Caco-2 (cell line): ENCODE measurements at regions of chr12 and their contacts with region 1.

Region 1: DNA sequence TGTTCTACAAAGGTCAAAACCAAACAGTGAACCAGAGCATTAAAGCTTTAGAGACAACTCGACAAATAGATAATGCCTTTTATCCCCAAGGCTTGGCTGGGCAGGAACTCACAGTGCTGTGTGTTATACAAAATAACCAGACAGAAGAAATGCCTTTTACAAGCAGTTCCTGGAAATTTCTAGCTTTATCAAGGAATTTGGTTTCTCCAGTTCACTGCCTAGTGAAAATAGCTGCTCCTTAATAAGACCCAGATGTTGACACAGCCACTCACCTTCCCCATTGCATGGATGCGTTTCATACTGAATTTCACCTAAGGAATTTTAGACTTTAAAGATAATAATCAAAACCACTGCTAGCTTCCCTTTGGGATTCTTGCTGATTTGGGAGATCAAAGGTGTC is 162.1 kb downstream of the C12orf75 start:
- DNase-seq: peak; percentile 72 to 74
- H3K4me3 ChIP-seq: no peak overlapping the region
- H3K4me3 Mint-ChIP-seq: peak overlapping the region; percentile 54
- H3K27ac Mint-ChIP-seq: peak overlapping the region; percentile 88
- H3K4me1 ChIP-seq: peaks cover 28% of the 10 kb centered on the region
- H3K4me1 Mint-ChIP-seq: peaks cover 26% of the 10 kb centered on the region
- H3K27me3 ChIP-seq: no peaks in the 10 kb centered on the region
- H3K27me3 Mint-ChIP-seq: no peaks in the 10 kb centered on the region
- CTCF ChIP-seq: no peak

Region 2: DNA sequence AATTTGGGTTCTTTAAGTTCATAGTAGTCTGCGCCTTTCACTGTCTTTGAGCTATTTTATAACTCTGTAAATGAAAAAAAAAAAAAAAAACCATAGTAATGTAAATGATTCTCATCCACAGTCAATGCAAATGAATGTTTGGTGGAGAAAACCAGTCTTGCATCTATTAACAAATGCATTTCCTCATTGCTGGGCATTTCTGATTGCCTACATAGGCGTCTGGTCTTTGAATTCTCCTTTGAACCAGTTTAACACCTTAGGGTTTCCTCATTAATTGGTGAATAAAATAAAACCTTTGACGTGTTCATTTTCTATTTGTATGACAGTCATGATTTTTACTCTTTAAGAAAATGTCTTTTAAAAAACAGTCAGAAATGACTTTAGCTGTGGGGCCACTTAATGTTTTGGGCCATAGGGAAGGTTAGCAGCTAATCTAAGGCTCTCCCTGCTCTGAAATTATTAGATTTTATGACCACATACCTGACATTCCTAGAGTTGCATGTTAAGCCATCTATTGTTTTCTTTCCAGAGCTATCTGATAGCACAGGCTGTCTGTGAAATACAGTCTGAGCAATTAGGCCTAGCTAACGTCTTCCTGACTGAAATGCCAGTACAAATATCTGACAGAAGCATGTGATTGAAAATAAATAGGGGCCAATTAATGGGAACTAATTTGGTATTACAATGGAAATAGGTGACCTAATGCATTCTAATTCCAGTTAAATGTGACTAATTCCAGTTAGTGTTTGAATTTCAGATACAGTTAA is 47.2 kb before region 1 on chr12:
- CTCF ChIA-PET with region 1: interaction called, 3 read pairs
- POLR2A ChIA-PET with region 1: interaction called, 4 read pairs
- intact Hi-C with region 1: loop called (anchors 1 kb)
- DNase-seq: peak; percentile 50 to 69
- H3K4me3 ChIP-seq: no peak overlapping the region
- H3K4me3 Mint-ChIP-seq: no peak overlapping the region
- H3K27ac Mint-ChIP-seq: peak overlapping the region; percentile 88
- H3K4me1 ChIP-seq: peaks cover 45% of the 10 kb centered on the region
- H3K4me1 Mint-ChIP-seq: peaks cover 15% of the 10 kb centered on the region
- H3K27me3 ChIP-seq: no peaks in the 10 kb centered on the region
- H3K27me3 Mint-ChIP-seq: no peaks in the 10 kb centered on the region
- CTCF ChIP-seq: no peak

Region 3: DNA sequence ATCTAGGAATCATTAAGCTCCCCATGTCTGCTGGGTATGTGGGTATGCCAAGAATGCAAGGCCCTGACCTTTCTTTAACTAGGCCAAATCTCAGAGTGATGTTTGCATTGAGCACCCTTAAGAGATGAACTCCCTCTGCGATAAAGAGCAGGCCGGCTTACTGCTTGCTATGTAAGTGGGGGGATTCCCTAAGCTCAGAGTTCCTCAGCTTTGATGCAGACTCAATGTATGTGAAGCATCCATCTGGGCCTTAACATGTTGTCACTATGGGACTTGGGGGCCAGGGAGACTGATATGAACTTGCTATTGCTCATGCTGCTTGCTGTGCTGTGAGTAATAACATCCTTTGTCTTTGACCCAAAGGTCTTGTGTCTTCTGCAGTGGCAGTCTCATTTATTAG is 12.4 kb before region 1 on chr12:
- CTCF ChIA-PET with region 1: no interaction called
- POLR2A ChIA-PET with region 1: no interaction called
- intact Hi-C with region 1: loop called (anchors 1 kb)
- DNase-seq: peak; percentile 55 to 65
- H3K4me3 ChIP-seq: no peak overlapping the region
- H3K4me3 Mint-ChIP-seq: no peak overlapping the region
- H3K27ac Mint-ChIP-seq: peak overlapping the region; percentile 65
- H3K4me1 ChIP-seq: peaks cover 32% of the 10 kb centered on the region
- H3K4me1 Mint-ChIP-seq: peaks cover 46% of the 10 kb centered on the region
- H3K27me3 ChIP-seq: no peaks in the 10 kb centered on the region
- H3K27me3 Mint-ChIP-seq: no peaks in the 10 kb centered on the region
- CTCF ChIP-seq: no peak

Region 4: DNA sequence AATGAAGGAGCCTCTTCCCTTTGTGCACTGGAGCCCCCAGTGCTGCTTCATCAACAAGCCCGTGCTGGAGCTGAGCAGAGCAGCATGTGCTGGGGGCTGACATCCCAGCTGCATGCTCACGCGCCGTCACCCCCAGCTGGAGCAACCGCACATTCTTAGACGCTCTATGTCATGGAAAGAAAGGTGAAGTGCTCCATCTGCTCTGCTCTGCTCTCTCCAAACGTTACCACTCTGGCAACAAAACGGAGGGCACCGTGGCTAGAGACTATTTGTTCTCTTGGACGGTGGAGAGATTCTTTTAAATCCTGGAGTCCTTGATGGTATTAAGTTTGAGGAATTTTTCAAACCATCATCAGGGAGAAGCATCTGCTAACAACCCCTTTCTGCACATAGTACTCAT is 46.3 kb after region 1 on chr12:
- CTCF ChIA-PET with region 1: no interaction called
- POLR2A ChIA-PET with region 1: no interaction called
- intact Hi-C with region 1: no loop called
- DNase-seq: no peak
- H3K4me3 ChIP-seq: no peak overlapping the region
- H3K4me3 Mint-ChIP-seq: no peak overlapping the region
- H3K27ac Mint-ChIP-seq: no peak overlapping the region
- H3K4me1 ChIP-seq: no peaks in the 10 kb centered on the region
- H3K4me1 Mint-ChIP-seq: no peaks in the 10 kb centered on the region
- H3K27me3 ChIP-seq: no peaks in the 10 kb centered on the region
- H3K27me3 Mint-ChIP-seq: no peaks in the 10 kb centered on the region
- CTCF ChIP-seq: no peak

Region 5: GRCh38 chr12:105672121-105672975 is 179.8 kb after region 1 on chr12:
- CTCF ChIA-PET with region 1: no interaction called
- POLR2A ChIA-PET with region 1: no interaction called
- intact Hi-C with region 1: no loop called
- DNase-seq: no peak
- H3K4me3 ChIP-seq: no peak overlapping the region
- H3K4me3 Mint-ChIP-seq: no peak overlapping the region
- H3K27ac Mint-ChIP-seq: no peak overlapping the region
- H3K4me1 ChIP-seq: peaks cover 5% of the 10 kb centered on the region; the same call in 1 of the 2 replicates
- H3K4me1 Mint-ChIP-seq: peaks cover 17% of the 10 kb centered on the region
- H3K27me3 ChIP-seq: no peaks in the 10 kb centered on the region
- H3K27me3 Mint-ChIP-seq: no peaks in the 10 kb centered on the region
- CTCF ChIP-seq: no peak

Region 6: DNA sequence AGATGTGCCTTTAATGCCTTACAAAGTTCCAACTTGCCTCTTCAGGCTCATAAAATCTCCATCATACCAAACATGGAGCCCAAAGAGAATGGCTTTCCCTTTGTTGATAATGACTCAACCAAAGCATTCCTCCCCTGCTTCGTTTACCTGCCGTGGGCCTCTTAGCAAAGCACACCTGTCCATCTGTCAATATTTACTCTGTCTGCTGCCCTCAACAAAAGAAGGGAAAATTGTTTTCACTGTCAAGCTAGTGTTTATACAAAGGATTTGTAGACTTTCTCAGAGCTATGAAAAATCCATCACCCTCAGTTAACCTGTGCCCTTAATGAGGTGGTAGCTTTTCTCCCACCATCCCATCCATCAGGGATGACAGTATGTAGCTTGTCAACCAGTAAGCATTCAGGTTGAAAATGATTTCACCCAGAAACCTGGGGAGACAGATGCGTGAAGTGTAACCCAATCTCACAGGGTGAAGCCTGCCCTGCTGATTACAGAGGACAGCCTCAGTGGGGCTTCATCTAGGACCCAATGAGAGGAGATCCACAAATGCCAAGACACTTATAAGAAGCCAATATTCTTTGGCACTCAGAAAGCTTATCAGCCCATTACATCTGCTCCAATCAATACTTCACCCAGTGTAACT is 368.1 kb after region 1 on chr12:
- CTCF ChIA-PET with region 1: no interaction called
- POLR2A ChIA-PET with region 1: no interaction called
- intact Hi-C with region 1: loop called (anchors 1 kb)
- DNase-seq: peak; percentile 84 to 88
- H3K4me3 ChIP-seq: no peak overlapping the region
- H3K4me3 Mint-ChIP-seq: peak overlapping the region; percentile 40
- H3K27ac Mint-ChIP-seq: peak overlapping the region; percentile 79
- H3K4me1 ChIP-seq: peaks cover 31% of the 10 kb centered on the region
- H3K4me1 Mint-ChIP-seq: peaks cover 28% of the 10 kb centered on the region
- H3K27me3 ChIP-seq: no peaks in the 10 kb centered on the region
- H3K27me3 Mint-ChIP-seq: no peaks in the 10 kb centered on the region
- CTCF ChIP-seq: no peak